AG04450 (cell line): ENCODE measurements at regions of chr3 and their contacts with region 1.

Region 1: GRCh38 chr3:76044601-76045600 is 259.6 kb upstream of the ZNF717 start:
- DNase-seq: no peak
- H3K4me3 ChIP-seq: no peak overlapping the region
- H3K27ac ChIP-seq: no peak overlapping the region
- H3K27me3 ChIP-seq: no peaks in the 10 kb centered on the region
- CTCF ChIP-seq: peak; percentile 59

Region 2: GRCh38 chr3:75814797-75815196 is 230.1 kb before region 1 on chr3:
- CTCF ChIA-PET with region 1: interaction called, 28 read pairs
- POLR2A ChIA-PET with region 1: no interaction called
- DNase-seq: no peak
- H3K4me3 ChIP-seq: no peak overlapping the region
- H3K27ac ChIP-seq: no peak overlapping the region
- H3K27me3 ChIP-seq: no peaks in the 10 kb centered on the region
- CTCF ChIP-seq: no peak

Region 3: GRCh38 chr3:76034652-76035051 is 10.2 kb before region 1 on chr3:
- CTCF ChIA-PET with region 1: interaction called, 12 read pairs
- POLR2A ChIA-PET with region 1: no interaction called
- DNase-seq: no peak
- H3K4me3 ChIP-seq: no peak overlapping the region
- H3K27ac ChIP-seq: no peak overlapping the region
- H3K27me3 ChIP-seq: no peaks in the 10 kb centered on the region
- CTCF ChIP-seq: no peak

Region 4: GRCh38 chr3:76083992-76084391 is 39.1 kb after region 1 on chr3:
- CTCF ChIA-PET with region 1: interaction called, 11 read pairs
- POLR2A ChIA-PET with region 1: no interaction called
- DNase-seq: peak; percentile 30
- H3K4me3 ChIP-seq: no peak overlapping the region
- H3K27ac ChIP-seq: peak overlapping the region; percentile 22
- H3K27me3 ChIP-seq: no peaks in the 10 kb centered on the region
- CTCF ChIP-seq: no peak

Region 5: DNA sequence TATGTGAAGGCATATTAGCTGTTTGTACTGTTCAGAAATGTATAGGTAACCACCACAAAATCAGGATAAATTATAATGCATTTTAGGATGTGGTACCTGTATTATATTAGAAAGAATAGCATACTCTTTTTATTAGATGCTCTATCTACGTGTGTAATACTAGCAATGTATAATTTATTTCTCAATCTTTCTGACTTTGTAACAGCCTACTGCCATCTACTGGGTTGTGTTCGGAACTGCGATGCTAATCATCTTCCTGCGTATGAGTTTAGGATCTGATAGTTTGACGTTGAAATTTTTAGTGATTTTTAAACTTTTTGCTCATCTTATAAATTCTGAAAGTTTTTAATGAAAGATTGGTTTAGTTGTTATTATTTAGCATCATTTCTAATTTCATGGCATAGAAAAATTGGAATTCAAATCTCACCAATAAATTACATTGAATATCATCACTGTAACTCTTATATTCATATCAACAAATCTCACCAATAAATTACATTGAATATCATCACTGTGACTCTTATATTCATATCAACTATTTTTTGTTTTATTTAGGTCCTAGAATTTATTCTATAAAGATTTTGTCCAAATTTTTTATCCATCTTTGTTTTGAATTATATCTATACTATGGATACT is 63.2 kb after region 1 on chr3:
- CTCF ChIA-PET with region 1: interaction called, 10 read pairs
- POLR2A ChIA-PET with region 1: no interaction called
- DNase-seq: peak; percentile 24
- H3K4me3 ChIP-seq: no peak overlapping the region
- H3K27ac ChIP-seq: no peak overlapping the region
- H3K27me3 ChIP-seq: no peaks in the 10 kb centered on the region
- CTCF ChIP-seq: peak; percentile 93

Region 6: GRCh38 chr3:76345878-76346277 is 301.0 kb after region 1 on chr3:
- CTCF ChIA-PET with region 1: no interaction called
- POLR2A ChIA-PET with region 1: no interaction called
- DNase-seq: no peak
- H3K4me3 ChIP-seq: no peak overlapping the region
- H3K27ac ChIP-seq: no peak overlapping the region
- H3K27me3 ChIP-seq: no peaks in the 10 kb centered on the region
- CTCF ChIP-seq: no peak